ENCODE measurements at regions of chr3 and their contacts with region 1.

Region 1: GRCh38 chr3:107235928-107236315 is 141.3 kb upstream of the CCDC54 start:
- DNase-seq: peak in 3 of 10 donors; percentile 40 to 61 (median 49)

Region 2: GRCh38 chr3:106765342-106765741 is 470.6 kb before region 1 on chr3:
- intact Hi-C with region 1: no loop called
- DNase-seq: no peak

Region 3: DNA sequence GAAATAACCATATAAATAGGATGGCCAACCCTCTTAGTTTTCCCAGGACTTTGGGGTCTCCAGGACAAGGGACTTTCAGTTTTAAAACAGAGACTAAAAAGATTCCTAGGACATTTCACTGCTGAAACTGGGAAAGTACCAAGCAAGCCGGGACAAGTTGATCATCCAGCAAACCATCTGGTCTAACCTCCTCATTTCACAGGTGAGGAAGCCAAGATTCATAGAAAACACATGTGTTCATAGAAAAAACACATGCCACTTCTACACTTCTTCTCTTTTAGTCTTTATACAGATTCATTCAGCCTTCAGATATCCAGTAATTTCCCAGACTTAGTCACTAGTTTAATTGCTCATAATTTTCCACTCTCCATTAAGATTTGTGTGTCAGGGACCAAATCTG is 24.3 kb before region 1 on chr3:
- intact Hi-C with region 1: loop called (anchors 2 kb)
- DNase-seq: no peak

Region 4: DNA sequence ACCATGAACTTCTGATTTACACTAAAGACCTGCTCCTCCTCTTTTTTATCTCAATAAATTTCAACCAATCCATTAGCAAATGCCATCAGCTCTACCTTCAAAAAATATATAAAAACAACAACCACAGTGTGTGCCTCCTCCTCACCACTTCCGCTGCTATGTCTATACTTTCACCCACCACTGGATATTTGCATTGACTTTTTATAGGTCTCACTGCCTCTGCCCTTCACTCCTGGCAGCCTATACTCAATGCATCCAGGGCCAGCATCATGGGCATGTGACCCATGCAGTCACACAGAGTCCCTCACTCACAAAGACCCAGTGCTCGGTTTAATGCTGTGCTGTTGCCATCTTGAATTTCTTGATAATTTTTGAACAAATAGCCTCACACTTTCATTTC is 87.8 kb after region 1 on chr3:
- intact Hi-C with region 1: no loop called
- DNase-seq: no peak

Region 5: GRCh38 chr3:107522510-107523288 is 286.8 kb after region 1 on chr3 and contains the start of gene BBX:
- intact Hi-C with region 1: loop called (anchors 10 kb)
- DNase-seq: peak; percentile 85 to 99 (median 92)

Region 6: DNA sequence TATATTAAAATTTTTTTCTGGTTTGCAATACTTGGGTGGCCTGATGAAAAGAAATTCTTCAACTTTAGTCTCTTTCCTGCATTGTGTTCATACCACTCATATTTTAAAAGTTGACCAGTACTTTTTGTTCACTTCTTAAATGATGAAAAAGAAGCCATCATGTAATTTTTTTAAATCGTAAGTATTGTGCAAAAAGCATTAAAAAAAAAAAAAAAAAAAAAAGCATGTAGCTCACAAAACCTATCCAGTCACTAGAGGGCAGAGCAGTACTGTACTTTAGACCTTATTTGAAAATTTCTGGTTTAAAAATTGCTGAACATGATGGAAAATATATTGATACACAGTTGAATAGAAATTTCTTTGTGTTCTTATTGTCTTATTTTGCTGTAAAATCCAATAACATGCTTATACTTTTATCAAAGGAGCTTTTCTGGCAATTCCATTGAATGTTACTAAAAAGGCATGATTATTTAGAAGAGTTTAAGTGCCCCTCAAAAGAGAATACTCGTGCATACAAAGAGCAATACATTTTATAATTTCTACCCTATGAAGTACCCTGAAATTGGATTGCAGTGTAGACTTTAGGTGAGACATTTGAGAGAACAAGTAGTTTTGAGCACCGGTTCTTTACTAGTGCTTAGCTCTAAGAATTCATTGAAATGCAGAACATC is 424.5 kb after region 1 on chr3:
- intact Hi-C with region 1: loop called (anchors 5 kb)
- DNase-seq: no peak

Region 7: GRCh38 chr3:108477511-108478147 is 1241.7 kb after region 1 on chr3:
- intact Hi-C with region 1: loop called (anchors 10 kb)
- DNase-seq: peak in 7 of 10 donors; percentile 23 to 84 (median 52)